Mammary epithelial cell (primary cell): ENCODE measurements at regions of chr11 and their contacts with region 1.

Region 1: DNA sequence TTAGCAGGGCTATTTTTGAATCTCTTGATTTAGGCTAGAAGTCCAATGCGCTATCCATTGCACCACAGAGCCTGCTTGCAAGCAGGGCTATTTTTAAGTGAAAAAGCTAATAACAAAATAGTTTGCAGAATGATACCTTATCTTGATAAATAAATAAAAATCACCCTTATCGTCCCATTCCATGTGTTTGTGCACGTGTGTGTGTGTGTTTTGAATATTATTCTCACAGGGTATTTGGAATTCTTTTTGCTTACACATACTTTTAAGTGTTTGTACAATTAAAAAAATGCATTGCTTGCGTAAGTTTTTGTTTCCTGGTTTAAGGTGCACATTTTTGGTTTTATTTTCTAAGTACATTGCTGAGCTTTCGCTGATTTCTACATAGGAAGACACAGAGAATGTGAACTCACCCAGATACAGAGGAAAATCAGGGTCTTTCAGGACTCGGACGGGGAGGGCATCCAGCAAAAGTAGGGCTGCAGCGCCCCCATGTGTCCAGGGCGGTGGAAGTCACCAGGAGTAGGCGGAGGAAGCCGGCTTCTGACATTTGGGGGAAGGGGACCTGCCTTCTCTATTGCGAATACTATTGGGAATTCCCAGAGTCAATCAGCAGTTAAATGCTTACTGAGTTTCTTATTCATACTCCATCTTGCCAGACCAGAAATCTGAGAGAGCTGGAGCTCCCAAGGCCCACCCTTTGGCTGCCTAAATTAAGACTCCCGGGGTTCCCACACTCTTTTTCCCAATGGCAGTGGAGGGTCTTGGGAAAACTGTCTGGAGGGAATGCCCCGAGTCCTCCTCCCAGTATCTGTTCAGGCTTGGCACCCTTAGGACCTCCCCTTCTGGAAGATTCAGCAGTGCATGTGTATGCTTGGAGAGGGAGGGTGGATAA is 27.2 kb downstream of the SLC1A2 start:
- DNase-seq: peak; percentile 54
- H3K4me3 ChIP-seq: no peak overlapping the region
- H3K27ac ChIP-seq: no peak overlapping the region
- H3K4me1 ChIP-seq: peaks cover 14% of the 10 kb centered on the region
- H3K27me3 ChIP-seq: no peaks in the 10 kb centered on the region
- CTCF ChIP-seq: peak; percentile 74 to 90

Region 2: GRCh38 chr11:34585735-34586487 is 806.3 kb before region 1 on chr11:
- CTCF ChIA-PET with region 1: no interaction called
- dilution Hi-C with region 1: no loop called
- in situ Hi-C with region 1: no loop called
- intact Hi-C with region 1: loop called (anchors 5 kb)
- DNase-seq: peak; percentile 55
- H3K4me3 ChIP-seq: no peak overlapping the region
- H3K27ac ChIP-seq: no peak overlapping the region
- H3K4me1 ChIP-seq: no peaks in the 10 kb centered on the region
- H3K27me3 ChIP-seq: no peaks in the 10 kb centered on the region
- CTCF ChIP-seq: peak; percentile 52 to 70

Region 3: GRCh38 chr11:34916015-34916842 is 475.9 kb before region 1 on chr11 and contains the starts of genes APIP and PDHX:
- CTCF ChIA-PET with region 1: no interaction called
- dilution Hi-C with region 1: loop called (anchors 25 kb)
- in situ Hi-C with region 1: no loop called
- intact Hi-C with region 1: no loop called
- DNase-seq: peak; percentile 98
- H3K4me3 ChIP-seq: peak within 1 kb of the TSS; percentile 89 to 93 (median 92)
- H3K27ac ChIP-seq: peak within 1 kb of the TSS; percentile 91
- H3K4me1 ChIP-seq: peaks cover 22% of the 10 kb centered on the region
- H3K27me3 ChIP-seq: no peaks in the 10 kb centered on the region
- CTCF ChIP-seq: no peak
- total RNA-seq, gene APIP: 10.7 to 19.0 TPM
- total RNA-seq, gene PDHX: 25.2 to 33.4 TPM

Region 4: GRCh38 chr11:34997952-34998528 is 394.1 kb before region 1 on chr11:
- CTCF ChIA-PET with region 1: no interaction called
- dilution Hi-C with region 1: no loop called
- in situ Hi-C with region 1: no loop called
- intact Hi-C with region 1: loop called (anchors 1 kb)
- DNase-seq: peak; percentile 43
- H3K4me3 ChIP-seq: no peak overlapping the region
- H3K27ac ChIP-seq: peak overlapping the region; percentile 18
- H3K4me1 ChIP-seq: peaks cover 6% of the 10 kb centered on the region
- H3K27me3 ChIP-seq: no peaks in the 10 kb centered on the region
- CTCF ChIP-seq: peak; percentile 48

Region 5: DNA sequence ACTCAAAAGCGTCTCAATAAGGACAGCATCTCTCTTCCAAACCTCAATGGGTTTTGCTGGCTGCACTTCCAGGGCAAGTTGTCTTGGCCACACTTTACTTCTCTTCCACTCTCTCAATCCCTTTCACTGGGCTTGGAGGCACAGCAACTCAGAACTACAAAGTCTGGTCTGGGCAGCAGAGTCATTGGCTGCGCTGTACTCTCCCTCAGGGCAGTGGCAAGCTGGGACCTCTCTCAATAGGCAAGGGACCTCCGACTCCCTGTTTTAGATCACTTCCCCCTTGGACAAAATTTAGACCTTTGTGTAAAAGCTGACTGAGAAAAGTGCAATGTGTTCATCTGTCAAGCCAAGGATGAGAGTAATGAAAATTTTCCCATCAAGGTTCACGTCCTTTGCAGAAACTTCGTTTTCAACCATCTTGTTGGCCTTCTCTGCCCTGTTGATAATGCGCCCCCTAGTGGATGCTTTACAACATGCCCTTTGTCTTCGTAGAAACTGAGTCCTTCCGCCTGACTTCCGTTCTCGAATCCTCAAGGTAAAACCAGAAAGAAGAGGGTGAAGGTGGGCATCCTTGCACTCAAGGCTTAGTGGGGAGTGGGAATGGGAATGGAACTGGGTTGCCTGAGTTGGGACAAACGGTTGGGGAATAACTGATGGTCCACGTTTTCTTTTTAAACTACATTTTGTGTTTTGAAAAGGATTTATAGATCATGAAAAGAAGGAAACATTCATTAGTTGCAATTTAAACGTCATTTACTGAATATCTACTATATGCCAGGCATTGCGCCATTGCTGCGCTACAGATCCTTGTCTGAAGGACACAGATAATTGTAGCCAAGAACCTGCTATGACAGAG is 154.1 kb before region 1 on chr11:
- CTCF ChIA-PET with region 1: no interaction called
- dilution Hi-C with region 1: no loop called
- in situ Hi-C with region 1: no loop called
- intact Hi-C with region 1: loop called (anchors 5 kb)
- DNase-seq: no peak
- H3K4me3 ChIP-seq: no peak overlapping the region
- H3K27ac ChIP-seq: no peak overlapping the region
- H3K4me1 ChIP-seq: peaks cover 19% of the 10 kb centered on the region
- H3K27me3 ChIP-seq: no peaks in the 10 kb centered on the region
- CTCF ChIP-seq: peak; percentile 79 to 91

Region 6: DNA sequence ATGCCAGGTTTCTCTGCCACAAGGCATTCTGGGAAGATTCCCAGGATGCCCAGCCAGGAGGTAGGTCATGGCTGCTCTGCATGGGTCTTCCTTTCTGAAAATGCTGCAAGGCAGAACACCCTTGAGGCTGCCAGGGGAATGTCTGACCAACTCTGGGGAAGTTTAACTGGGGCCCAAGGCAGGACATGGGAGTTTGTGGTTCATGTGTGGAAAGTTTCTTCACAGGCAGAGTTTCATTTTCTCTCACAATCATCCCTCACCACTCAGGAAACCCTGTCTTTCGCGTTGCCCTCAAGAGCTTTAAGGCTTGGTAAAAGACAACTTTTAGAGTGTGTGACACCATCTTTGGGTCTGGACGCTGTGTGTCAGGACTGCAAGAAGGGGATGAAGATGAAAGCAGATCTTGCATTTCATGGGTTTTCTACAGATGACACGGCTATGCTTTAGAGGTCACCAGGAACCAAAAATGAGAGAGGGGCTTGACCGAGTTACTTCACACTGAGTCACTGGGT is 119.7 kb before region 1 on chr11:
- CTCF ChIA-PET with region 1: no interaction called
- dilution Hi-C with region 1: loop called (anchors 25 kb)
- in situ Hi-C with region 1: no loop called
- intact Hi-C with region 1: no loop called
- DNase-seq: no peak
- H3K4me3 ChIP-seq: no peak overlapping the region
- H3K27ac ChIP-seq: no peak overlapping the region
- H3K4me1 ChIP-seq: peaks cover 21% of the 10 kb centered on the region
- H3K27me3 ChIP-seq: no peaks in the 10 kb centered on the region
- CTCF ChIP-seq: no peak